ENCODE measurements at regions of chr3 and their contacts with region 1.

Region 1: GRCh38 chr3:165696496-165696895 is 140.7 kb downstream of the BCHE start:
- DNase-seq: no peak
- ATAC-seq: no peak
- H3K4me3 ChIP-seq: no peak overlapping the region
- H3K27ac ChIP-seq: no peak overlapping the region
- H3K4me1 ChIP-seq: no peaks in the 10 kb centered on the region
- H3K27me3 ChIP-seq: no peaks in the 10 kb centered on the region
- CTCF ChIP-seq: no peak

Region 2: GRCh38 chr3:165716592-165716991 is 20.1 kb after region 1 on chr3:
- intact Hi-C with region 1: loop called in 1 of 10 experiments (anchors 2 kb)
- DNase-seq: no peak
- ATAC-seq: no peak
- H3K4me3 ChIP-seq: no peak overlapping the region
- H3K27ac ChIP-seq: no peak overlapping the region
- H3K4me1 ChIP-seq: no peaks in the 10 kb centered on the region
- H3K27me3 ChIP-seq: no peaks in the 10 kb centered on the region
- CTCF ChIP-seq: no peak

Region 3: GRCh38 chr3:165954178-165954577 is 257.7 kb after region 1 on chr3:
- intact Hi-C with region 1: no loop called
- DNase-seq: no peak
- ATAC-seq: no peak
- H3K4me3 ChIP-seq: no peak overlapping the region
- H3K27ac ChIP-seq: no peak overlapping the region
- H3K4me1 ChIP-seq: no peaks in the 10 kb centered on the region
- H3K27me3 ChIP-seq: no peaks in the 10 kb centered on the region
- CTCF ChIP-seq: no peak